Naive thymus-derived CD4-positive, alpha-beta T cell (primary cell): ENCODE measurements at regions of chr3 and their contacts with region 1.

Region 1: DNA sequence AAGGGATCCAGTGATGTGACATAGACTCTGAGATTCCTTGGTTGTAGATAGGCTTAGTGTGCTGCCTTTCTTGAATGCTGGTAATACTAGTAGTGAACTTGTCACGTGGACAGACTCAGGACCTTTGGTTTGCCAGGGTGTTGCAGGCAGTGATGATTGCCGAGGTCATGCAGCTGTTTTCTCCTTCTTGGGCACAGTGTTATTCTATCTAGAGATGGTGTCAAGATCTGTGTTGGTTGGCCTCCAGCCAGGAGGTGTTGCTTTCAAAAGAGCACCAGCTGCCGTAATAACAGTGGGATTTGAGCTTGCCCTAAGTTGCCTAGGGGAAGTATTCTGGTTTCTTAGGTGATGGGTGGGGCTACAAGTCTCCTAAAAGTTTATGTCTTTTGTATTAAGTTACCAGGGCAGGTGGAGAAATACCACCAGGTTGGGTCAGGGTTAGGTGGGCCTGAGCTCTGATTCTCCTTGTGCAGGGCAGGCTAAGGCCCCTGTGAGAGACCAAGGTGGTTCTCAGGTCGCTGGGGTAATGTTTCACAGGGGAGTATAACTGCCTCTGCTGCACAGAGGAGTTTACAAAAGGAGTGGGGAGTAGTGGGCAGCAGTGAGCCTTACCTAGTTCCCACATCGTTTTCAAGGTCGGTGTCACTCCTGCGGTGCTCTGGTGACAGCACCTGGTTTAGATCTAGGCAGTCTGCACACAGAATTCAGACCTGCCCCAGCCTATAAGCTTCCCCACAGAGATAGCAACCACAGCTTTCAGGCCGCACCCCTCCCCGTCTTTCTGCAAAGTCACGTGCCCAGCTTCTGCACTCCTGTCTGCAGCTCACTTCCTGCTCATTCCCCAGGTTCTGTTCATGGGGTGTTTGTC is 350.3 kb downstream of the DOCK3 start:
- DNase-seq: peak; percentile 34 to 88 (median 81)
- ATAC-seq: peak; percentile 96
- H3K4me3 ChIP-seq: peak overlapping the region; percentile 55
- H3K4me3 Mint-ChIP-seq: peak overlapping the region; percentile 66 to 89 (median 78)
- H3K27ac ChIP-seq: peak overlapping the region; percentile 70
- H3K27ac Mint-ChIP-seq: peak overlapping the region; percentile 81 to 98 (median 96)
- H3K4me1 ChIP-seq: peaks cover 36 to 41% of the 10 kb centered on the region in 2 donors
- H3K4me1 Mint-ChIP-seq: peaks cover 27 to 72% (median 69%) of the 10 kb centered on the region in 7 donors
- H3K27me3 ChIP-seq: no peaks in the 10 kb centered on the region
- H3K27me3 Mint-ChIP-seq: peaks cover 0 to 8% (median 0%) of the 10 kb centered on the region in 5 donors

Region 2: GRCh38 chr3:50674349-50675178 is 350.4 kb before region 1 on chr3 and contains the start of gene DOCK3:
- CTCF ChIA-PET with region 1: no interaction called
- POLR2A ChIA-PET with region 1: no interaction called
- intact Hi-C with region 1: loop called in 1 of 2 experiments (anchors 10 kb)
- DNase-seq: peak; percentile 30 to 77 (median 69)
- ATAC-seq: peak; percentile 92
- H3K4me3 ChIP-seq: peak within 1 kb of the TSS; percentile 63
- H3K4me3 Mint-ChIP-seq: peak within 1 kb of the TSS; percentile 71 to 87 (median 81)
- H3K27ac ChIP-seq: no peak within 1 kb of the TSS
- H3K27ac Mint-ChIP-seq: peak within 1 kb of the TSS in 4 of 9 donors; percentile 4 to 58 (median 40)
- H3K4me1 ChIP-seq: no peaks in the 10 kb centered on the region
- H3K4me1 Mint-ChIP-seq: peaks cover 4 to 10% (median 6%) of the 10 kb centered on the region in 7 donors
- H3K27me3 ChIP-seq: peaks cover 0 to 3% of the 10 kb centered on the region in 2 donors
- H3K27me3 Mint-ChIP-seq: peaks cover 17 to 65% (median 32%) of the 10 kb centered on the region in 5 donors
- total RNA-seq, gene DOCK3: 1.5 to 2.9 (median 1.9) TPM

Region 3: DNA sequence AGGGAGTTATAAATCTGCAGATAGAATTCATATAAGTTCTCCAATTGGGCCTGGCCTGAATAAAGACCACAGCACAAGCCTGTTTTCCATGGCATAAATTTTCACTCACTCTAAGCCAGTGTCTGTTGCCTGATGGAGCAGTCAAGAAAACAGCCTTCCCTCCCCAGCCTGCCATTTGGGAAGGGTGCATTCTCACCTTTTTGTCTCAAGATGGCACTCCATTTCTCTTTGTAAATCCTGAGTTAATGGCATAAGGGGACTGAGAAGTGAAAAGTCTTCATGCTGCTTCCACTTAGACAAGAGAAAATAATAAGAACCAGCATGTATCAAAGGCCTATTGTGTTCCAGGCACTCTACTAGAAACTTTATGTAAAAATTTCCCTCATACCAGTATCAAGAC is 244.5 kb after region 1 on chr3:
- CTCF ChIA-PET with region 1: no interaction called
- POLR2A ChIA-PET with region 1: no interaction called
- intact Hi-C with region 1: loop called in 1 of 2 experiments (anchors 2 kb)
- DNase-seq: no peak
- ATAC-seq: no peak
- H3K4me3 ChIP-seq: no peak overlapping the region
- H3K4me3 Mint-ChIP-seq: peak overlapping the region in 5 of 10 donors; percentile 2 to 80 (median 21)
- H3K27ac ChIP-seq: no peak overlapping the region
- H3K27ac Mint-ChIP-seq: peak overlapping the region in 6 of 9 donors; percentile 45 to 99 (median 96)
- H3K4me1 ChIP-seq: peaks cover 6 to 32% of the 10 kb centered on the region in 2 donors
- H3K4me1 Mint-ChIP-seq: peaks cover 10 to 59% (median 51%) of the 10 kb centered on the region in 7 donors
- H3K27me3 ChIP-seq: no peaks in the 10 kb centered on the region
- H3K27me3 Mint-ChIP-seq: no peaks in the 10 kb centered on the region

Region 4: DNA sequence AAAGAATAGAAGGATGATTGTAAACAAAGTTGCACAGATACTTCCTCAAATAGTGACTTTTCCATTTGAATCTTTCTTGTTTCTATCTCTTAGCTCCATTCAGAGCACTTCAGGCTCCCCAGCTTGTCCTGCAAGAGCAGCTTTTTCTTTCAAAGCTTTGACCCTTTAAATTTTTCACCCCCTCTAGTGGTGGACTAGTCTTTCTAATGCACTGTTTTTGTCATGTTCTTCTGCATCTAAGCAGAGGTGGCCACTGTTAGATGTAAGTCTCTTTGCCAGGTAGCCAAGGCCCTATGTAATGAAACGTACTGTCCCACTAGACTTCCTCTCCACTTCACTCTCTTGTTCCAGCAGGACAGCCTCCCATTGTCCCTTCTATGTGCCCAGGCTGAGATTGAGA is 286.1 kb after region 1 on chr3:
- CTCF ChIA-PET with region 1: no interaction called
- POLR2A ChIA-PET with region 1: no interaction called
- intact Hi-C with region 1: loop called in 1 of 2 experiments (anchors 1 kb)
- DNase-seq: peak in 7 of 9 donors; percentile 4 to 53 (median 39)
- ATAC-seq: peak; percentile 32
- H3K4me3 ChIP-seq: no peak overlapping the region
- H3K4me3 Mint-ChIP-seq: no peak overlapping the region
- H3K27ac ChIP-seq: no peak overlapping the region
- H3K27ac Mint-ChIP-seq: no peak overlapping the region
- H3K4me1 ChIP-seq: no peaks in the 10 kb centered on the region
- H3K4me1 Mint-ChIP-seq: peaks cover 0 to 10% (median 0%) of the 10 kb centered on the region in 7 donors
- H3K27me3 ChIP-seq: peaks cover 0 to 7% of the 10 kb centered on the region in 2 donors
- H3K27me3 Mint-ChIP-seq: no peaks in the 10 kb centered on the region